A549 (cell line): ENCODE measurements at regions of chr20 and their contacts with region 1.

Region 1: DNA sequence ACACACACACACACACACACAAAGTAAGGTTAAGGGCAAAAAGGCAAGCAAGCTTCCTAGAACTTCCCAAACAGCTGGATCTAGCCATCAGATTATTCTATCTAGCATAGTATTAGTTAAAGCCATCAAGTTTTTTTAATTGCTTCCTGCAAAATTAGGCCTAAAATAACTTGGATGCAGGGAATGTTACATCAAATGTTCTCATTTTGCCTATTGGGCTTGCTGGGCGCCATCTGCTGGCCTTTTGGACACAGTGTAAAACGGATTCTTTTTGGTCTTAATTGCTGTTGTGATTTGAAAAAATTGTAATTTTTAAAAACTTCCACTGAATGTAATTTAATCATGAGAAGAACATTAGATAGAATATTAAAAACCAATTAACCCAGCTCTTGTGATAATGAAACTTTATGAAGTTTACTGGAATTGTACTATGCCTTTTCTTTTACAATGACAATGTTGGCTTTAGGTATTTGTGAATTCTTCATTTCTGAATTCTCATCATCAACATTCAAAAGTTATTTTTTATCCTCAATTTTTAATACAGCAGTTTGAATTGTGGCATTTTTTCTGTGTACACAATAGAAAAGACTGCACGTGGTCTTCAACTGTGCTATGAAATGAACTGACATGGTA is 6.8 kb downstream of the MKKS start:
- DNase-seq: peak; percentile 55 to 84
- ATAC-seq: peak in 1 of 2 experiments; percentile 64; a peak in 3 of 6 replicates
- H3K4me3 ChIP-seq: no peak overlapping the region
- H3K27ac ChIP-seq: peak overlapping the region; percentile 90 to 96
- H3K4me1 ChIP-seq: peaks cover 80% of the 10 kb centered on the region
- CTCF ChIP-seq: peak; percentile 98
- EP300 ChIP-seq: no peak
- POLR2A ChIP-seq: no peak
- RAD21 ChIP-seq: peak; percentile 87 to 90

Region 2: GRCh38 chr20:10219452-10219791 is 207.8 kb before region 1 on chr20:
- CTCF ChIA-PET with region 1: interaction called, 6 read pairs
- POLR2A ChIA-PET with region 1: interaction called, 14 read pairs
- DNase-seq: peak; percentile 56 to 74
- ATAC-seq: peak; percentile 62 to 74
- H3K4me3 ChIP-seq: peak overlapping the region; percentile 70
- H3K27ac ChIP-seq: peak overlapping the region; percentile 77 to 93
- H3K4me1 ChIP-seq: peaks cover 63% of the 10 kb centered on the region
- CTCF ChIP-seq: no peak
- EP300 ChIP-seq: no peak
- POLR2A ChIP-seq: peak; percentile 14; the same call in 1 of the 2 replicates
- RAD21 ChIP-seq: peak; percentile 22 to 56; a peak in 4 of 5 replicates

Region 3: DNA sequence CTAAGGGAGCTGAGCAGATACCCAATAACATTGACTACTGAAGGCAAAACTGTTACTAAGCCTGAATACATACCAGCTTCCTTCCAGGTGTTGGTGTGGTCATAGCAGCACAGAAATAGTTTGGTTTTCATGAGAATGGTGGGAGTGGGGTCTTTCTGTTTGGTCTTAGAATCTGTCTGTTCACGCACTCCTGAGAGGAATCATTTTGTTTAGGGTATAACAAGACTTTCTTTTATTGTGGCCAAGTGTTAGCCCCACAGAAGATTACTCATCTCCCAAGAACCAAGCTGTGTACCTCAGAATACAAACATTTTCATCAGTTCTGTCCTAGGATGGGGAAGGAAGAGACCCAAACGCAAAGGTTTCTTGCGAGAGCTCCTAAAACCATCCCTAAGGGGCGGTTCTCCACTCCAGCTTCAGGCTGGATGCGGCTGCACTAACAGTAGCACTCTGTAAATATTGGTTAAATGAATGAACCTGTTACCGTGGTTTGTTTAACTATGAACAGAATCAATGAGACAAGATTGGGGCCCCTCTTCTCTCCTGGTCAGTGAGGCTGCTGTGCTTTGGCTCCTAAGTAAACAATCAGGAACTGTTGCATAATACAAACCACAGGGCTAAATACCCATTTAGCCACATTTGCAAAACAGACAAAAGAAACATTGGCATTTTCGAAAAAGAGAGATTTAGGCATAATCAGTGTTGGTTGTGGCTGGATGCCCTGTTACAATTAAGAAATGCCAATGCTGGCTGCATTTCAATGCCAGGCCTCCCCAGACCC is 163.6 kb before region 1 on chr20:
- CTCF ChIA-PET with region 1: interaction called, 13 read pairs
- POLR2A ChIA-PET with region 1: interaction called, 3 read pairs
- DNase-seq: peak in 1 of 2 experiments; percentile 35
- ATAC-seq: peak; percentile 25 to 51; a peak in 3 of 6 replicates
- H3K4me3 ChIP-seq: no peak overlapping the region
- H3K27ac ChIP-seq: peak overlapping the region; percentile 46 to 73; a peak in 5 of 6 replicates
- H3K4me1 ChIP-seq: peaks cover 52% of the 10 kb centered on the region
- CTCF ChIP-seq: no peak
- EP300 ChIP-seq: 0 out of 5 replicates have a peak, but pooled peaks of 1 of the 2 experiments have one; percentile 10
- POLR2A ChIP-seq: no peak
- RAD21 ChIP-seq: no peak

Region 4: GRCh38 chr20:10316582-10316981 is 110.6 kb before region 1 on chr20:
- CTCF ChIA-PET with region 1: interaction called, 20 read pairs
- POLR2A ChIA-PET with region 1: interaction called, 3 read pairs
- DNase-seq: peak in 1 of 2 experiments; percentile 76
- ATAC-seq: peak in 1 of 2 experiments; percentile 54; a peak in 3 of 6 replicates
- H3K4me3 ChIP-seq: no peak overlapping the region
- H3K27ac ChIP-seq: peak overlapping the region; percentile 30 to 56; a peak in 5 of 6 replicates
- H3K4me1 ChIP-seq: peaks cover 37% of the 10 kb centered on the region
- CTCF ChIP-seq: peak; percentile 46; the same call in 2 of the 3 replicates
- EP300 ChIP-seq: no peak
- POLR2A ChIP-seq: no peak
- RAD21 ChIP-seq: peak; percentile 48 to 65; a peak in 4 of 5 replicates

Region 5: GRCh38 chr20:10357974-10358373 is 69.2 kb before region 1 on chr20:
- CTCF ChIA-PET with region 1: interaction called, 42 read pairs
- POLR2A ChIA-PET with region 1: interaction called, 10 read pairs
- DNase-seq: peak in 1 of 2 experiments; percentile 29
- ATAC-seq: no peak
- H3K4me3 ChIP-seq: no peak overlapping the region
- H3K27ac ChIP-seq: peak overlapping the region; percentile 92 to 93
- H3K4me1 ChIP-seq: peaks cover 36% of the 10 kb centered on the region
- CTCF ChIP-seq: peak; percentile 22; the same call in 1 of the 3 replicates
- EP300 ChIP-seq: no peak
- POLR2A ChIP-seq: no peak
- RAD21 ChIP-seq: peak; percentile 30 to 50; a peak in 2 of 5 replicates

Region 6: DNA sequence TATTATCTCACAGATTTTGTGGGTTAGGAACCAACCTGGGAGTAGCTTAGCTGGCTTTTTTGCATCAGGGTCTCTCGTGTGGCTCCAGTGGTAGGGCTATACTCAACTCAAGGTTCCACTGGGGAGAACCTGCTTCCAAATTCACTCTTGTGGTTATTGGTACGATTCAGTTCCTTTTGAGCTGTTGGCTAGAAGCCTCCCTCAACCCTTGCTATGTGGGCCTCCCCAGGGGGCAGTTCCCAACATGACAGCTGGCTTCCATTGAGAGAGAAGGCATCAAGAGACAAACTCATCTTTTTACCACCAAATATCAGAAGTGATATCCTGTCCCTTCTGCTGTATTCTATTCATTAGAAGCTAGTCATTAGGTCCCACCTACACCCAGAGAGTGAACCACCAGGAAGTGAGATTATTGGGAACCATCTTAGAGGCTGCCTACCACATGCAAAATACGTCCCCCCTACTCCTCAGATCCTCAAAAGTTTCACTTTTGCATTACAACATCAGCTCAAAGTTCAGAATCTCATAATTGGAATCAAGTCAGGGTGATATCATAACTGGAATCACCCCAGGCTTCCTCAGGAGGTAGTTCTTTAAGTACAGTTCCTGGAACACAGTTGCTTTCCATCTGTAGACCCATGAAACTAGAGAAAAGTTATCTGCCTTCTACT is 24.1 kb before region 1 on chr20:
- CTCF ChIA-PET with region 1: interaction called, 66 read pairs
- POLR2A ChIA-PET with region 1: no interaction called
- DNase-seq: no peak
- ATAC-seq: no peak
- H3K4me3 ChIP-seq: no peak overlapping the region
- H3K27ac ChIP-seq: peak overlapping the region; percentile 11 to 66; a peak in 3 of 6 replicates
- H3K4me1 ChIP-seq: peaks cover 25% of the 10 kb centered on the region
- CTCF ChIP-seq: no peak
- EP300 ChIP-seq: no peak
- POLR2A ChIP-seq: no peak
- RAD21 ChIP-seq: no peak

Region 7: GRCh38 chr20:10673988-10674711 is 247.0 kb after region 1 on chr20 and contains the start of gene JAG1:
- CTCF ChIA-PET with region 1: no interaction called
- POLR2A ChIA-PET with region 1: no interaction called
- DNase-seq: peak; percentile 97 to 99
- ATAC-seq: peak; percentile 73 to 76
- H3K4me3 ChIP-seq: peak within 1 kb of the TSS; percentile 92
- H3K27ac ChIP-seq: peak within 1 kb of the TSS; percentile 95 to 97
- H3K4me1 ChIP-seq: peaks cover 33% of the 10 kb centered on the region
- CTCF ChIP-seq: no peak
- EP300 ChIP-seq: peak in 1 of 2 experiments; percentile 10; a peak in 2 of 5 replicates
- POLR2A ChIP-seq: peak; percentile 42; the same call in 1 of the 2 replicates
- RAD21 ChIP-seq: peak in 1 of 2 experiments; percentile 14; a peak in 1 of 5 replicates
- polyA plus RNA-seq, gene JAG1: 90.0 and 141 TPM in 2 replicates

Region 8: DNA sequence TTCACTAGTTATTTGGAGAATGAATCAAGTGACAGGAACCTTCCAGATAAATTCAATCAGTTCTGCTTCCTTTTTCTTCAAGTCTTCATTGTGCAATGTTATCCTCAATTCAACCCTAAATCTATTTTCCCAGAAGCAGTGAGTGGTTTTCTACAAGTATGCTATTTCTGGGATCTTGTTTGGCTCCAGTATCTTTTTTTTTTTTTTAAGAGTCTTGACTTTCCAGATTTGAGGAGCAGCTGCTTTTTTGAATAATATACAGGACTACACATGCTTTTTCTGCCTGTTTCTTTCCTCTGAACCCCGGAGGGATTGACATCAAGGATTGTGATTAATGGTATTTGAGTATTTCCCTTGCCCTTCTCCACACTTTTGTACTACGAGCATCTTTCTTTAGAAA is 585.8 kb after region 1 on chr20:
- CTCF ChIA-PET with region 1: no interaction called
- POLR2A ChIA-PET with region 1: no interaction called
- DNase-seq: no peak
- ATAC-seq: no peak
- H3K4me3 ChIP-seq: no peak overlapping the region
- H3K27ac ChIP-seq: no peak overlapping the region
- H3K4me1 ChIP-seq: no peaks in the 10 kb centered on the region
- CTCF ChIP-seq: no peak
- EP300 ChIP-seq: no peak
- POLR2A ChIP-seq: no peak
- RAD21 ChIP-seq: no peak